ENCODE measurements at regions of chr9 and their contacts with region 1.

Region 1: DNA sequence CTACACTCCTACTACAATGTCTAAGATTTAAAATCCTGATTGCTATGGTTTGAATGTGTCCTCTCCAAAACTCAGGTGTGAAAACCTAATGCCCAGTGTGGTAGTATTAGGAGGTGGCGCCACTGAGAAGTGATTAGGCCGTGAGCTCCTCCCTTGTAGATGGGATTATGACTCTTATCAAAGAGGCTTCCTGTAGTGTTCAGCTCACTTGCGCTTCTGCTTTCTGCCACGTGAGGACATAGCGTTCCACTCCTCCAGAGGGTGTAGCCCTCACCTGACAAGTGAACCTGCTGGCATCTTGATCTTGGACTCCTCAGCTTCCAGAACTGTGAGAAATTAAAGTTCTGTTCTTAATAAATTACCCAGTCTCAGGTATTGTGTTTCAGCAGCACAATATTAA is 33.0 kb upstream of the WHRN start:
- DNase-seq: peak; percentile 34
- H3K4me3 Mint-ChIP-seq: no peak overlapping the region
- H3K27ac Mint-ChIP-seq: no peak overlapping the region
- H3K4me1 Mint-ChIP-seq: no peaks in the 10 kb centered on the region
- H3K27me3 Mint-ChIP-seq: no peaks in the 10 kb centered on the region
- CTCF ChIP-seq: no peak

Region 2: GRCh38 chr9:114452219-114453165 is 85.7 kb before region 1 on chr9:
- CTCF ChIA-PET with region 1: no interaction called
- POLR2A ChIA-PET with region 1: no interaction called
- intact Hi-C with region 1: no loop called
- DNase-seq: no peak
- H3K4me3 Mint-ChIP-seq: no peak overlapping the region
- H3K27ac Mint-ChIP-seq: no peak overlapping the region
- H3K4me1 Mint-ChIP-seq: no peaks in the 10 kb centered on the region
- H3K27me3 Mint-ChIP-seq: no peaks in the 10 kb centered on the region
- CTCF ChIP-seq: no peak

Region 3: GRCh38 chr9:114525505-114525904 is 12.7 kb before region 1 on chr9:
- CTCF ChIA-PET with region 1: interaction called, 15 read pairs
- POLR2A ChIA-PET with region 1: interaction called, 7 read pairs
- intact Hi-C with region 1: no loop called
- DNase-seq: peak; percentile 48
- H3K4me3 Mint-ChIP-seq: no peak overlapping the region
- H3K27ac Mint-ChIP-seq: no peak overlapping the region
- H3K4me1 Mint-ChIP-seq: peaks cover 6% of the 10 kb centered on the region
- H3K27me3 Mint-ChIP-seq: peaks cover 10% of the 10 kb centered on the region
- CTCF ChIP-seq: no peak

Region 4: GRCh38 chr9:114551883-114552685 is 13.8 kb after region 1 on chr9:
- CTCF ChIA-PET with region 1: interaction called, 25 read pairs
- POLR2A ChIA-PET with region 1: interaction called, 14 read pairs
- intact Hi-C with region 1: no loop called
- DNase-seq: peak; percentile 97
- H3K4me3 Mint-ChIP-seq: no peak overlapping the region
- H3K27ac Mint-ChIP-seq: peak overlapping the region; percentile 91
- H3K4me1 Mint-ChIP-seq: peaks cover 18% of the 10 kb centered on the region
- H3K27me3 Mint-ChIP-seq: peaks cover 8% of the 10 kb centered on the region
- CTCF ChIP-seq: no peak

Region 5: GRCh38 chr9:114616653-114617520 is 78.6 kb after region 1 on chr9:
- CTCF ChIA-PET with region 1: no interaction called
- POLR2A ChIA-PET with region 1: no interaction called
- intact Hi-C with region 1: no loop called
- DNase-seq: no peak
- H3K4me3 Mint-ChIP-seq: no peak overlapping the region
- H3K27ac Mint-ChIP-seq: no peak overlapping the region
- H3K4me1 Mint-ChIP-seq: peaks cover 11% of the 10 kb centered on the region
- H3K27me3 Mint-ChIP-seq: no peaks in the 10 kb centered on the region
- CTCF ChIP-seq: no peak